Activated B cell treated with CpG ODN at 0.5 μM for 24 hours (primary cell): ENCODE measurements at regions of chr4 and their contacts with region 1.

Region 1: GRCh38 chr4:25913851-25914669 is at the start of gene SMIM20:
- DNase-seq: peak; percentile 85
- ATAC-seq: peak; percentile 92
- H3K4me3 Mint-ChIP-seq: peak within 1 kb of the TSS; percentile 99
- H3K27ac Mint-ChIP-seq: peak within 1 kb of the TSS; percentile 97
- H3K4me1 Mint-ChIP-seq: peaks cover 36% of the 10 kb centered on the region
- H3K27me3 Mint-ChIP-seq: no peaks in the 10 kb centered on the region
- CTCF ChIP-seq: no peak
- total RNA-seq, gene SMIM20: 16.6 and 18.7 TPM in 2 replicates

Region 2: DNA sequence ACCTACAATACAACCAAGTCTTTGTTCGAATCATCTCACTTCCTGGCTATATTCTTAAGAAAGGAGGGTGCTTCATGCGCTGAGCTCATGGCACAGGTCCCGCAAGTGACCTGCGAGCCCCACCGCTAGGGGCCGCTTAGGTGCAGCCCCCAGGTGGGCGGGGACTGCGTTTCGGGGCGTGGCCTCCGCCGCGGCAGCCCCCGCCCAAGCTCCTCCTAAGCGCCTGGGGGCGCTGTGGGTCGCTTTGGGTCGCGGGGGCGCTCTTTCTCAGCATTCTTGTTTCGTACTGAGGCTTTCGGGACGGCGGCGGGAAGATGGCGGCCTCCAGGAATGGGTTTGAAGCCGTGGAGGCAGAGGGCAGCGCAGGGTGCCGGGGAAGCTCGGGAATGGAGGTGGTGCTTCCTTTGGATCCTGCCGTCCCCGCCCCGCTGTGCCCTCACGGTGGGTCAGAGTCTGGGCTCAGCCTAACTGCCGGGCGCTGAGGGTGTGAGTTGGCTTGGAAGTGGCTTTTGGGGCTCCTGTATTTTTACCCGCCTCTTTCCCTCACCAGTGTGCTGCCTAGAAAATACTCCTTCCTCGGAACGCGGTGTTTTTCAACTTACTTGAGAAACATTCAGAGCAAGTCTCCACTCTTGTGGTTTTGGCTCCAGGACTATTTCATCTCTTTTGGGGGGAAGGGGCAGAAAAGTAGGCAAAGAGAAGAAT is 601.4 kb before region 1 on chr4 and contains the start of gene ZCCHC4:
- CTCF ChIA-PET with region 1: no interaction called
- POLR2A ChIA-PET with region 1: no interaction called
- intact Hi-C with region 1: loop called (anchors 1 kb)
- DNase-seq: peak; percentile 95
- ATAC-seq: peak; percentile 99
- H3K4me3 Mint-ChIP-seq: peak within 1 kb of the TSS; percentile 98
- H3K27ac Mint-ChIP-seq: peak within 1 kb of the TSS; percentile 95
- H3K4me1 Mint-ChIP-seq: peaks cover 45% of the 10 kb centered on the region
- H3K27me3 Mint-ChIP-seq: no peaks in the 10 kb centered on the region
- CTCF ChIP-seq: peak; percentile 90
- total RNA-seq, gene ZCCHC4: 14.7 and 19.1 TPM in 2 replicates

Region 3: GRCh38 chr4:25870081-25870480 is 44.0 kb before region 1 on chr4:
- CTCF ChIA-PET with region 1: interaction called, 3 read pairs
- POLR2A ChIA-PET with region 1: interaction called, 99 read pairs
- intact Hi-C with region 1: loop called (anchors 1 kb)
- DNase-seq: no peak
- ATAC-seq: no peak
- H3K4me3 Mint-ChIP-seq: no peak overlapping the region
- H3K27ac Mint-ChIP-seq: peak overlapping the region; percentile 84
- H3K4me1 Mint-ChIP-seq: peaks cover 99% of the 10 kb centered on the region
- H3K27me3 Mint-ChIP-seq: no peaks in the 10 kb centered on the region
- CTCF ChIP-seq: no peak

Region 4: GRCh38 chr4:25884031-25884782 is 29.9 kb before region 1 on chr4:
- CTCF ChIA-PET with region 1: no interaction called
- POLR2A ChIA-PET with region 1: interaction called, 99 read pairs
- intact Hi-C with region 1: loop called (anchors 1 kb)
- DNase-seq: no peak
- ATAC-seq: peak; percentile 57
- H3K4me3 Mint-ChIP-seq: no peak overlapping the region
- H3K27ac Mint-ChIP-seq: peak overlapping the region; percentile 62
- H3K4me1 Mint-ChIP-seq: peaks cover 50% of the 10 kb centered on the region
- H3K27me3 Mint-ChIP-seq: no peaks in the 10 kb centered on the region
- CTCF ChIP-seq: no peak

Region 5: GRCh38 chr4:26028793-26029567 is 114.9 kb after region 1 on chr4:
- CTCF ChIA-PET with region 1: no interaction called
- POLR2A ChIA-PET with region 1: no interaction called
- intact Hi-C with region 1: no loop called
- DNase-seq: peak; percentile 55
- ATAC-seq: peak; percentile 92
- H3K4me3 Mint-ChIP-seq: no peak overlapping the region
- H3K27ac Mint-ChIP-seq: no peak overlapping the region
- H3K4me1 Mint-ChIP-seq: peaks cover 2% of the 10 kb centered on the region
- H3K27me3 Mint-ChIP-seq: peaks cover 13% of the 10 kb centered on the region
- CTCF ChIP-seq: no peak

Region 6: GRCh38 chr4:26992657-26993361 is 1078.7 kb after region 1 on chr4:
- CTCF ChIA-PET with region 1: no interaction called
- POLR2A ChIA-PET with region 1: no interaction called
- intact Hi-C with region 1: loop called (anchors 10 kb)
- DNase-seq: peak; percentile 26
- ATAC-seq: peak; percentile 80
- H3K4me3 Mint-ChIP-seq: no peak overlapping the region
- H3K27ac Mint-ChIP-seq: no peak overlapping the region
- H3K4me1 Mint-ChIP-seq: peaks cover 17% of the 10 kb centered on the region
- H3K27me3 Mint-ChIP-seq: no peaks in the 10 kb centered on the region
- CTCF ChIP-seq: no peak